B cell (primary cell): ENCODE measurements at regions of chrX and their contacts with region 1.

Region 1: GRCh38 chrX:107894038-107894437 is 68.4 kb downstream of the MID2 start:
- DNase-seq: peak; percentile 59
- ATAC-seq: no peak
- H3K4me3 ChIP-seq: no peak overlapping the region
- H3K4me3 Mint-ChIP-seq: no peak overlapping the region
- H3K27ac ChIP-seq: no peak overlapping the region
- H3K27ac Mint-ChIP-seq: no peak overlapping the region
- H3K4me1 ChIP-seq: no peaks in the 10 kb centered on the region
- H3K4me1 Mint-ChIP-seq: no peaks in the 10 kb centered on the region
- H3K27me3 ChIP-seq: no peaks in the 10 kb centered on the region
- H3K27me3 Mint-ChIP-seq: peaks cover 11% of the 10 kb centered on the region
- CTCF ChIP-seq: peak; percentile 73

Region 2: GRCh38 chrX:106874075-106874474 is 1020.0 kb before region 1 on chrX:
- CTCF ChIA-PET with region 1: interaction called, 16 read pairs
- POLR2A ChIA-PET with region 1: no interaction called
- intact Hi-C with region 1: loop called (anchors 5 kb)
- DNase-seq: peak; percentile 23
- ATAC-seq: no peak
- H3K4me3 ChIP-seq: no peak overlapping the region
- H3K4me3 Mint-ChIP-seq: no peak overlapping the region
- H3K27ac ChIP-seq: no peak overlapping the region
- H3K27ac Mint-ChIP-seq: no peak overlapping the region
- H3K4me1 ChIP-seq: no peaks in the 10 kb centered on the region
- H3K4me1 Mint-ChIP-seq: no peaks in the 10 kb centered on the region
- H3K27me3 ChIP-seq: peaks cover 0 to under 1% (median 0%) of the 10 kb centered on the region in 4 experiments
- H3K27me3 Mint-ChIP-seq: no peaks in the 10 kb centered on the region
- CTCF ChIP-seq: peak; percentile 67

Region 3: GRCh38 chrX:107025545-107025944 is 868.5 kb before region 1 on chrX:
- CTCF ChIA-PET with region 1: interaction called, 7 read pairs
- POLR2A ChIA-PET with region 1: no interaction called
- intact Hi-C with region 1: loop called (anchors 1 kb)
- DNase-seq: peak; percentile 24
- ATAC-seq: no peak
- H3K4me3 ChIP-seq: no peak overlapping the region
- H3K4me3 Mint-ChIP-seq: no peak overlapping the region
- H3K27ac ChIP-seq: no peak overlapping the region
- H3K27ac Mint-ChIP-seq: no peak overlapping the region
- H3K4me1 ChIP-seq: no peaks in the 10 kb centered on the region
- H3K4me1 Mint-ChIP-seq: no peaks in the 10 kb centered on the region
- H3K27me3 ChIP-seq: no peaks in the 10 kb centered on the region
- H3K27me3 Mint-ChIP-seq: peaks cover 12% of the 10 kb centered on the region
- CTCF ChIP-seq: peak; percentile 28

Region 4: GRCh38 chrX:107857799-107858198 is 36.2 kb before region 1 on chrX:
- CTCF ChIA-PET with region 1: no interaction called
- POLR2A ChIA-PET with region 1: no interaction called
- intact Hi-C with region 1: no loop called
- DNase-seq: no peak
- ATAC-seq: no peak
- H3K4me3 ChIP-seq: no peak overlapping the region
- H3K4me3 Mint-ChIP-seq: no peak overlapping the region
- H3K27ac ChIP-seq: no peak overlapping the region
- H3K27ac Mint-ChIP-seq: no peak overlapping the region
- H3K4me1 ChIP-seq: no peaks in the 10 kb centered on the region
- H3K4me1 Mint-ChIP-seq: no peaks in the 10 kb centered on the region
- H3K27me3 ChIP-seq: no peaks in the 10 kb centered on the region
- H3K27me3 Mint-ChIP-seq: no peaks in the 10 kb centered on the region
- CTCF ChIP-seq: no peak